ENCODE measurements at regions of chr17 and their contacts with region 1.

Region 1: GRCh38 chr17:76408052-76408849 is 23.8 kb downstream of the SPHK1 start:
- DNase-seq: no peak
- H3K4me3 ChIP-seq: no peak overlapping the region
- H3K27ac ChIP-seq: no peak overlapping the region
- H3K4me1 ChIP-seq: peaks cover 0 to 30% (median 0%) of the 10 kb centered on the region in 3 donors
- H3K27me3 ChIP-seq: no peaks in the 10 kb centered on the region
- CTCF ChIP-seq: peak in 5 of 6 experiments; percentile 71 to 83 (median 73)
- POLR2A ChIP-seq: no peak

Region 2: DNA sequence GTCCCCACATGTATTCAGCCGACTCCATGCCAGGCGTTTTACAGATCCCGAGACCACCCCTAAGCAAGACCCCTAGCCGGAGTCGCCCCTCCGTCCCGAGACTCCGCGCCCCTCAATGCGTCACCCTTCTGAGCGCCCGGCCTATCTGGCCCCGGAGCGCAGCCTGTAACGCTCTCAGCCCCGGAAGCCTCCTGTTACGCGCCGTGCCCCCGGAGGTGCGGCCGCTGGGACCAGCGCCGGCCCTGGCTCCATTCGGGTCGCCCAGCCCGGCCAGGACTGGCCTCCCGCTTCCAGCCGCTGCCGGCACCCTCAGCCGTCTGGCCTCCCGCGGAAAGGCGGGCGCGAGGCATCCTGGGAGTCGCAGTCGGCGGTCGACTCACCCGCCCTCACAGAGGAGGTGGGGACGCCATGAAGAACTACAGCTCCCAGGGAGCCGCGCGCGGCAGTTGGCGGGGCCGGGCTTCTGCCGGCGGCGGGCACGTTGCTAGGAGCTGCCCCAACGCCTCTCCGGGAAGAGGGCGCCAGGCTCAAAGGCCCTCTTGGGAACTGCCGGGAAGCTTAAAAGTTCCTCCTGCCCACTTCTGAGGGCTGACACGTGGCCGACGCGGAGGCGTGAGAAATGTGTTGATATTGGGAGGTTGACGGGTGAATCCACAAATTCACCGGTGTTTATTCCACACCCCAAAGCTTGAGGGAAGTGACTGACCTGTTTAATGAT is 467.4 kb before region 1 on chr17 and contains the start of gene FBF1:
- intact Hi-C with region 1: loop called (anchors 10 kb)
- DNase-seq: peak; percentile 54
- H3K4me3 ChIP-seq: peak within 1 kb of the TSS; percentile 55 to 95 (median 68)
- H3K27ac ChIP-seq: peak within 1 kb of the TSS; percentile 86 to 88 (median 87)
- H3K4me1 ChIP-seq: peaks cover 5 to 16% (median 11%) of the 10 kb centered on the region in 3 donors
- H3K27me3 ChIP-seq: no peaks in the 10 kb centered on the region
- CTCF ChIP-seq: peak in 2 of 6 experiments; percentile 10 to 44
- POLR2A ChIP-seq: peak in 3 of 4 donors; percentile 76 to 82 (median 77)
- total RNA-seq, gene FBF1: 13.9 to 18.3 (median 15.5) TPM

Region 3: GRCh38 chr17:76337413-76337777 is 70.9 kb before region 1 on chr17:
- intact Hi-C with region 1: no loop called
- DNase-seq: no peak
- H3K4me3 ChIP-seq: no peak overlapping the region
- H3K27ac ChIP-seq: no peak overlapping the region
- H3K4me1 ChIP-seq: no peaks in the 10 kb centered on the region
- H3K27me3 ChIP-seq: no peaks in the 10 kb centered on the region
- CTCF ChIP-seq: no peak
- POLR2A ChIP-seq: no peak

Region 4: DNA sequence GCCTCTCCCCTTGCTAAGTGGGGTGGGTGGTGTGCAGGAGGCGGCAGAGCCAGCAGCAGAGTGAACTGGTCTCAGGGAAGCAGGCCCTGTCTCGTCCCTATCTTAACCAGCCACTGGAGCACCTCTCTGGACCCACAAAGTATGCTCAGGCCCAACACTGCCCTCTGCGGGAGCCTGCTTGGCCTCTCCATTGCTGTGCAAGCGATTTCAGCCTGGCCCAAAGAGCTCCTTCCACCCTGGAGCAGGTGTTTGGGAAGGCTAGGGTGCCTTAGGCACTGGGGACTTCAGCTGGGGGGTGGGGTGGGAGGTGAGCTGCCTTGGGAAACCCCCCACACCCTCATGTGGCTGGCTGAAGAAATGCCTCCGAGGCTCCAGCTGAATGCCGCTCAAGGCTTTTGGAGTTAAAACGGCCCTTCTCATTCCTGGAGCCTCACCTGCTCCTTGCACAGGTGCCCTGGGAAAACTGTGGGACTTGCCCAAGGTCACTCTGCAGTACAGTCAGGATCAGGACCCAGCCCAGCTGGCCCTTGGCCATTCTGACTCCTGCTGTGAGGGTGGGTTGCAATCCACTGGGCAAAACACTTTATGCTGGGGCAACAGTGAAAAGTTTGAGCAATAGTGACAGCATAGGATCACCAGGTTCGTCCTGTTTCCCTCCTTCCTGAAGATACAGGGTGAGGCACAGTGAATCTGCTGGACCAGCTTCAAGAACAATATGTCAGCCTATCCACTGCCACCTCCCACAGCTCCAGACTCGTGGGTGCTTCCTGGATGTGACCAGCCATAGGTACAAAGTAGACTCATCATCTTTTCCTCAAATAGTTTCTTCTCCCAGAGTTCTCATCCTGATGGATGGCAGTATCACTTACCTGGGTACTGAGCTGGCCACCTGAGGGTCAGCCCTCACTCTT is 50.6 kb after region 1 on chr17:
- intact Hi-C with region 1: loop called (anchors 5 kb)
- DNase-seq: no peak
- H3K4me3 ChIP-seq: no peak overlapping the region
- H3K27ac ChIP-seq: no peak overlapping the region
- H3K4me1 ChIP-seq: no peaks in the 10 kb centered on the region
- H3K27me3 ChIP-seq: no peaks in the 10 kb centered on the region
- CTCF ChIP-seq: peak in 5 of 6 experiments; percentile 21 to 55 (median 42)
- POLR2A ChIP-seq: no peak

Region 5: GRCh38 chr17:76501018-76501826 is 93.0 kb after region 1 on chr17 and contains the start of gene RHBDF2:
- intact Hi-C with region 1: loop called (anchors 10 kb)
- DNase-seq: no peak
- H3K4me3 ChIP-seq: peak within 1 kb of the TSS; percentile 64 to 95 (median 84)
- H3K27ac ChIP-seq: peak within 1 kb of the TSS; percentile 84 to 94 (median 91)
- H3K4me1 ChIP-seq: peaks cover 14 to 64% (median 33%) of the 10 kb centered on the region in 3 donors
- H3K27me3 ChIP-seq: no peaks in the 10 kb centered on the region
- CTCF ChIP-seq: peak in 2 of 6 experiments; percentile 11 to 14
- POLR2A ChIP-seq: peak in 3 of 4 donors; percentile 42 to 97 (median 90)
- total RNA-seq, gene RHBDF2: 27.0 to 38.5 (median 33.7) TPM

Measured in esophagus squamous epithelium (tissue), 5 donors.